ENCODE measurements at regions of chr18 and their contacts with region 1.

Region 1: GRCh38 chr18:323253-323622 is 55.4 kb upstream of the THOC1 start:
- DNase-seq: no peak
- ATAC-seq: peak; percentile 44
- H3K4me3 ChIP-seq: no peak overlapping the region
- H3K4me1 ChIP-seq: no peaks in the 10 kb centered on the region
- CTCF ChIP-seq: no peak

Region 2: GRCh38 chr18:389658-390357 is 66.6 kb after region 1 on chr18:
- intact Hi-C with region 1: loop called in 1 of 2 experiments (anchors 10 kb)
- DNase-seq: no peak
- ATAC-seq: no peak
- H3K4me3 ChIP-seq: no peak overlapping the region
- H3K4me1 ChIP-seq: no peaks in the 10 kb centered on the region
- CTCF ChIP-seq: no peak

Measured in mucosa of descending colon (tissue), 3 donors.